Caco-2 (cell line): ENCODE measurements at regions of chr14 and their contacts with region 1.

Region 1: GRCh38 chr14:85358136-85358785 is 171.7 kb upstream of the FLRT2 start:
- DNase-seq: peak; percentile 68 to 76
- H3K4me3 ChIP-seq: no peak overlapping the region
- H3K4me3 Mint-ChIP-seq: no peak overlapping the region
- H3K27ac Mint-ChIP-seq: peak overlapping the region; percentile 77
- H3K4me1 ChIP-seq: peaks cover 26% of the 10 kb centered on the region
- H3K4me1 Mint-ChIP-seq: peaks cover 17% of the 10 kb centered on the region
- H3K27me3 ChIP-seq: no peaks in the 10 kb centered on the region
- H3K27me3 Mint-ChIP-seq: no peaks in the 10 kb centered on the region
- CTCF ChIP-seq: no peak

Region 2: GRCh38 chr14:85187521-85187920 is 170.7 kb before region 1 on chr14:
- CTCF ChIA-PET with region 1: no interaction called
- POLR2A ChIA-PET with region 1: no interaction called
- intact Hi-C with region 1: loop called (anchors 1 kb)
- DNase-seq: no peak
- H3K4me3 ChIP-seq: no peak overlapping the region
- H3K4me3 Mint-ChIP-seq: no peak overlapping the region
- H3K27ac Mint-ChIP-seq: no peak overlapping the region
- H3K4me1 ChIP-seq: peaks cover 20% of the 10 kb centered on the region
- H3K4me1 Mint-ChIP-seq: no peaks in the 10 kb centered on the region
- H3K27me3 ChIP-seq: no peaks in the 10 kb centered on the region
- H3K27me3 Mint-ChIP-seq: no peaks in the 10 kb centered on the region
- CTCF ChIP-seq: no peak

Region 3: DNA sequence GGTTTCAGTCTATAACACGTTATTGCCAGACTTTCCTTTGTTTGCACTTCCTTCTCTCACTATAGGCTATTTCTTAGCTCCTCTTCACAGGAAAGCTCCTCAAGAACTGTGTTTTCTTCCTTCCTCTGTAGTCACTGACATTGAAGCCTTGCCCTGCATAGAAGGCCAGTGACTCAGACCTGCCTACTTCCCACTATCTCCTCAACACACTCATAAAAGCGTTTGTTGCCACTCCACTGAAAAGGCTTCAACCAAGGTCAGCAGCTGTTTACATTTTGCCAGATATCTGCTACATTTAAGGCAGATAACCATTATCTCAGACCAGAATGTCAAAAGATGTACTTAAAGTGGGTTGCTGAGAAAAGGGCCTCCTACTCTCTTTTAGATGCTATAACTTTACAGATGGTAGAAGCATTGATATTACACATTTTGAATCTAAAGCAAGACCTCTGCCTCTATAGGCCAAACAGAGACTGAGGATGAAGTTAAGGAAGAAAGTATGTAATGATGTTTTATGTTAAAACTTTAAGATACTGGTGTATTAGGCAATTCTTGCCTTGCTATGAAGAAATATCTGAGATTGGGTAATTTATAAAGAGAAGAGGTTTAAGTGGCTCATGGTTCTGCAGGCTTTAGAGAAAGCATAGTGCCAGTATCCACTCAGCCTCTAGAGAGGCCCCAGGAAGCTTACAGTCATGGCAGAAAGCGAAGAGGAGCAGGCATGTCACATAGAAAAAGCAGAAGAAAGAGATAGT is 61.6 kb before region 1 on chr14:
- CTCF ChIA-PET with region 1: no interaction called
- POLR2A ChIA-PET with region 1: no interaction called
- intact Hi-C with region 1: loop called (anchors 5 kb)
- DNase-seq: peak; percentile 24 to 49
- H3K4me3 ChIP-seq: no peak overlapping the region
- H3K4me3 Mint-ChIP-seq: no peak overlapping the region
- H3K27ac Mint-ChIP-seq: no peak overlapping the region
- H3K4me1 ChIP-seq: no peaks in the 10 kb centered on the region
- H3K4me1 Mint-ChIP-seq: peaks cover 12% of the 10 kb centered on the region
- H3K27me3 ChIP-seq: no peaks in the 10 kb centered on the region
- H3K27me3 Mint-ChIP-seq: peaks cover 2% of the 10 kb centered on the region
- CTCF ChIP-seq: no peak

Region 4: DNA sequence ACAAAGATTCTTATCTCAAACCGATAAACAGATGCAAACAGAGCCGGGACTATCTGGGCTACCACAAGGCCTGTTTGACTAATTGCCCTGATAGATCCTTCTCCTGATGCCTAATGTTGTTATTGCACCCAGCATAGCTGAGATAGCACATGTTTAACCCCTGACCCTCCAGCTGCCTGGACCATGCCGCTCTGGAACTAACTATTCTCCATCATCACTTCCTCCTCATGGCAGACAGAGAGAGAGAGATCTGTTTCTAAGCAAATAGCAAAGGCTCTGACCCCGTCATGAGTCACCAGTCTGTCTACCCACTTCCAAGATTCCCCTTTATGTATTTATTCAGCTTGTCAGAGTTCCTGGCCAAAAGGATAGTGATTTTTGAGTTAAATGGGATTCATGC is 113.5 kb after region 1 on chr14:
- CTCF ChIA-PET with region 1: no interaction called
- POLR2A ChIA-PET with region 1: no interaction called
- intact Hi-C with region 1: loop called (anchors 1 kb)
- DNase-seq: peak; percentile 84 to 93
- H3K4me3 ChIP-seq: no peak overlapping the region
- H3K4me3 Mint-ChIP-seq: peak overlapping the region; percentile 6
- H3K27ac Mint-ChIP-seq: no peak overlapping the region
- H3K4me1 ChIP-seq: peaks cover 30% of the 10 kb centered on the region
- H3K4me1 Mint-ChIP-seq: peaks cover 9% of the 10 kb centered on the region
- H3K27me3 ChIP-seq: no peaks in the 10 kb centered on the region
- H3K27me3 Mint-ChIP-seq: no peaks in the 10 kb centered on the region
- CTCF ChIP-seq: no peak

Region 5: GRCh38 chr14:85482552-85482951 is 124.3 kb after region 1 on chr14:
- CTCF ChIA-PET with region 1: no interaction called
- POLR2A ChIA-PET with region 1: no interaction called
- intact Hi-C with region 1: loop called (anchors 1 kb)
- DNase-seq: peak; percentile 53
- H3K4me3 ChIP-seq: no peak overlapping the region
- H3K4me3 Mint-ChIP-seq: peak overlapping the region; percentile 42
- H3K27ac Mint-ChIP-seq: peak overlapping the region; percentile 75
- H3K4me1 ChIP-seq: peaks cover 36% of the 10 kb centered on the region
- H3K4me1 Mint-ChIP-seq: peaks cover 37% of the 10 kb centered on the region
- H3K27me3 ChIP-seq: no peaks in the 10 kb centered on the region
- H3K27me3 Mint-ChIP-seq: no peaks in the 10 kb centered on the region
- CTCF ChIP-seq: no peak

Region 6: GRCh38 chr14:85519661-85520305 is 161.5 kb after region 1 on chr14:
- CTCF ChIA-PET with region 1: no interaction called
- POLR2A ChIA-PET with region 1: no interaction called
- intact Hi-C with region 1: loop called (anchors 2 kb)
- DNase-seq: peak in 1 of 2 experiments; percentile 56
- H3K4me3 ChIP-seq: no peak overlapping the region
- H3K4me3 Mint-ChIP-seq: no peak overlapping the region
- H3K27ac Mint-ChIP-seq: peak overlapping the region; percentile 29
- H3K4me1 ChIP-seq: peaks cover 35% of the 10 kb centered on the region
- H3K4me1 Mint-ChIP-seq: peaks cover 17% of the 10 kb centered on the region
- H3K27me3 ChIP-seq: no peaks in the 10 kb centered on the region
- H3K27me3 Mint-ChIP-seq: no peaks in the 10 kb centered on the region
- CTCF ChIP-seq: no peak

Region 7: GRCh38 chr14:85528080-85528896 is 170.0 kb after region 1 on chr14:
- CTCF ChIA-PET with region 1: no interaction called
- POLR2A ChIA-PET with region 1: no interaction called
- intact Hi-C with region 1: loop called (anchors 2 kb)
- DNase-seq: peak in 1 of 2 experiments; percentile 36
- H3K4me3 ChIP-seq: no peak overlapping the region
- H3K4me3 Mint-ChIP-seq: no peak overlapping the region
- H3K27ac Mint-ChIP-seq: no peak overlapping the region
- H3K4me1 ChIP-seq: peaks cover 8% of the 10 kb centered on the region
- H3K4me1 Mint-ChIP-seq: peaks cover 24% of the 10 kb centered on the region
- H3K27me3 ChIP-seq: no peaks in the 10 kb centered on the region
- H3K27me3 Mint-ChIP-seq: no peaks in the 10 kb centered on the region
- CTCF ChIP-seq: peak; percentile 22 to 53